ENCODE measurements at regions of chr1 and their contacts with region 1.

Region 1: DNA sequence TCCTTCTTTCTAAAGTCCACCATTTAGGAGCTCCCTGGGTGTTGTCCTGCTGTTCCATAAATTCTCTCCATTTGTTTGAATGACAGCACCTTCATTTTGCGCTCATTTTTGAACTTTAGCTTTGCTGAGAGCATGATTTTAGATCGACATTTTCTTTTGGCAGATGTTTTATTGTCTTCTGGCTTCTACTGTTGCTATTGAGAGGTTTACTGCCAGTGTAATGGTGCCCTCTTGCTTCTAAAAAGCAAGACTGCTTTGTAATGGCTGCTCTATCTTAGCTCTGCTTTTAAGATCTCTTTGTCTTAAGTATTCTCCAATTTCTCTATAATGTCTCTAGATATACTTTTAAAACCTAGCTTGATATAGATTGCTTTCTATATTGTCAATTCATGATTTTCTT is 27.9 kb downstream of the THEM4 start:
- DNase-seq: no peak
- H3K4me3 Mint-ChIP-seq: no peak overlapping the region
- H3K27ac Mint-ChIP-seq: no peak overlapping the region
- H3K4me1 Mint-ChIP-seq: no peaks in the 10 kb centered on the region
- H3K27me3 Mint-ChIP-seq: no peaks in the 10 kb centered on the region

Region 2: GRCh38 chr1:151773702-151774101 is 107.8 kb before region 1 on chr1:
- CTCF ChIA-PET with region 1: no interaction called
- POLR2A ChIA-PET with region 1: no interaction called
- DNase-seq: no peak
- H3K4me3 Mint-ChIP-seq: no peak overlapping the region
- H3K27ac Mint-ChIP-seq: no peak overlapping the region
- H3K4me1 Mint-ChIP-seq: no peaks in the 10 kb centered on the region
- H3K27me3 Mint-ChIP-seq: no peaks in the 10 kb centered on the region

Region 3: DNA sequence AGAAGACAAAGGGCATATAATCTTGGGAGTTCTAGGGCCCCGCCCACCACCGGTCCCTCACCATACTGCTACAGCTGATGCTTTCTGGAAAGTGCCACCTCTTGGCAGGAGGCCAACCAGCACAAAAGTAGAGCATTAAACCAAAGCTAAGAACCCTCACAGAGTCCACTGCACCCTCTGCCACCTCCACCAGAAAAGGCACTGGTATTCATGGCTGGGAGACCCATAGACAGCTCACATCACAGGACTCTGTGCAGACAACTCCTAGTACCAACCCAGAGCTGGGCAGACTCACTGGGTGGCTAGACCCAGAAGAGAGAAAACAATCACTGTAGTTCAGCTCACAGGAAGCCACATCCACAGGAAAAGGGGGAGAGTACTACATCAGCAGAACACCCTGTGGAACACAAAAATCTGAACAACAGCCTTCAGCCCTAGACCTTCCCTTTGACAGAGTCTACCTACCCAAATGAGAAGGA is 17.1 kb after region 1 on chr1:
- CTCF ChIA-PET with region 1: interaction called, 12 read pairs
- POLR2A ChIA-PET with region 1: no interaction called
- DNase-seq: peak; percentile 78
- H3K4me3 Mint-ChIP-seq: peak overlapping the region; percentile 51
- H3K27ac Mint-ChIP-seq: peak overlapping the region; percentile 88
- H3K4me1 Mint-ChIP-seq: peaks cover 63% of the 10 kb centered on the region
- H3K27me3 Mint-ChIP-seq: no peaks in the 10 kb centered on the region

Region 4: DNA sequence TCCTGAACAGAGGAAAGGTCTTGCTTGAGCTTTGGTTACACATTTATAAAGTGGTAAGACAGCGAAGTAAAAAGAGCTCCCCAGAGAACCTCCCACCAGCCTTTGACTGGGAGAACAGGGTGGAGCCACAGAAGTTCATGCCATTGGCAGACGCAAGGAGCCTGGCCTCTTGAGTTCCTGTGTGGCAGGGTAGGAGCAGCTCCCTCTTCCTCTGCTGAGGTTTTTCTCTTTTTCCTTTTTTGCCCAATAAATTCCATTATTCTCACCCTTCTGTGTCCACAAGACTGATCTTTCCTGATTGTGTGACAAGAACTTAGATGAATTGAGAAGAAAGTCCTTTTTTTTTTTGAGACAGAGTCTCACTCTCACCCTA is 23.6 kb after region 1 on chr1:
- CTCF ChIA-PET with region 1: interaction called, 11 read pairs
- POLR2A ChIA-PET with region 1: no interaction called
- DNase-seq: peak; percentile 68
- H3K4me3 Mint-ChIP-seq: peak overlapping the region; percentile 59
- H3K27ac Mint-ChIP-seq: peak overlapping the region; percentile 95
- H3K4me1 Mint-ChIP-seq: peaks cover 65% of the 10 kb centered on the region
- H3K27me3 Mint-ChIP-seq: no peaks in the 10 kb centered on the region

Region 5: DNA sequence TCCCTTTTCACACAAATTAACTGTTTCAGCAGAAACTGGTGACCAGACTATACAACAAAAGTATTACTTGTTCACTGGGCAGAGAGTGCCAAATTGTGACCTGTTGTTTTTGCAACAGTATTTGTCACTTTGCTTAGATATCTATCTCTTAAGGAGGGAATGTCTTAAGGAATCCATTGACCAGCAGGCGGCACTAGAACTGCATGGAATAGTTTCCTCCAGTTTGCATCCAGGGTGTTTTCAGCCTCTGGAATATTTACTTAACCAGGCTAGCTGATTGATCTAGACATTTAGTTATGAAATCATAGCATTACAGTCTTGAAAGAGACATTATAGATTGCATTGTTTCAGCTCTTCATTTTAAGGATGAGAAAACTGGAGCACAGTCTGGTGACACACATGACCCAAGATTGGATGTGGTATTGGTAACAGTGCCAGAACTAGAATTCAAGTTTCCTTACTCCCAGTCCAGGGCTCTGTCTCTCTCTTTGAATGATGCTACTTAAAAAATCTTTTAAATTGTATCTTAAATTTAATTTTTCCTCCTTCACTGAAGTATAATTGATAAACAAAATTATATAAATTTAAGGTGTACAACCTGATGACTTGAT is 260.6 kb after region 1 on chr1:
- CTCF ChIA-PET with region 1: no interaction called
- POLR2A ChIA-PET with region 1: no interaction called
- DNase-seq: peak; percentile 10
- H3K4me3 Mint-ChIP-seq: no peak overlapping the region
- H3K27ac Mint-ChIP-seq: no peak overlapping the region
- H3K4me1 Mint-ChIP-seq: no peaks in the 10 kb centered on the region
- H3K27me3 Mint-ChIP-seq: peaks cover 45% of the 10 kb centered on the region

Measured in activated CD4-positive, alpha-beta T cell treated with anti-CD3 and anti-CD28 coated beads, Interleukin-2, amount 10 ng/mL, durations not matched to agents 7 days and 5 days (primary cell).